Naive thymus-derived CD8-positive, alpha-beta T cell (primary cell): ENCODE measurements at regions of chr19 and their contacts with region 1.

Region 1: DNA sequence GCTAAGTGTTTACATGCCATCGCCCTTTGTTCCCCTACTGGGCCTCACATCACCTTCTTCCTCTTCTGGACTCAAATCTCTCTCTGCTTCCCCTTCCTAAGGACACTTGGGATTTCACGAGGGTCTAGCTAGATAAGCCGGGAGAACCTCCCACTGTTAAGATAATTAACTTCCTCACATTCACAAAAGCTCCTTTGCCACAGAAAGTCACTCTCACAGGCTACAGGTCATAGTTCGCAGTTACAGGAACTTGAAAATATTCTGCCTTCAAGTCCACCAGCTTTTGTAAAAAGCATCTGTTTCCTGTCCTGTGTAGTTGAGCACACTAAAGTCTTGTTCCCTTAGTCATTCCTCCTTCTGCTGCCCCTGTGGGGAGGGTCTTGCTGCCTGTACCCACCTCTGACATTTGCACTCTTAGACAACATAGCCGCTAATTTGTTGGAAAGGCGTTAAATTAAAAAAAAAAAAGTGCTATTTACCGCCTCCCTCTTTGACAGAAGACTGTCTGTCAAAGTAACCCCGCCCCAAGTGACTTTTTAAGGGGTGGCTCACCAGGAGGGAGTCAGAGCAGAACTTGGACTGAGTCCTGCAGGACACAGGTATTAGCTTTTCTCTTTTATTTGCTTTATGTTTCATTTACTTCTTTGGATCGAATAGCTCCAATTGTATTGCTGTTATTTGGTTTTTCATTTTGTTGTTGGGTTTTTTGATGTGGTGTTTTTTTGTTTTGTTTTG is 26.8 kb upstream of the CEACAM21 start:
- DNase-seq: peak; percentile 55 to 93 (median 76)
- ATAC-seq: peak; percentile 63 to 71
- H3K4me3 Mint-ChIP-seq: peak overlapping the region; percentile 92 to 100 (median 99)
- H3K27ac Mint-ChIP-seq: peak overlapping the region; percentile 95 to 100 (median 96)
- H3K4me1 Mint-ChIP-seq: peaks cover 52 to 81% (median 65%) of the 10 kb centered on the region in 4 donors
- H3K27me3 Mint-ChIP-seq: no peaks in the 10 kb centered on the region

Region 2: DNA sequence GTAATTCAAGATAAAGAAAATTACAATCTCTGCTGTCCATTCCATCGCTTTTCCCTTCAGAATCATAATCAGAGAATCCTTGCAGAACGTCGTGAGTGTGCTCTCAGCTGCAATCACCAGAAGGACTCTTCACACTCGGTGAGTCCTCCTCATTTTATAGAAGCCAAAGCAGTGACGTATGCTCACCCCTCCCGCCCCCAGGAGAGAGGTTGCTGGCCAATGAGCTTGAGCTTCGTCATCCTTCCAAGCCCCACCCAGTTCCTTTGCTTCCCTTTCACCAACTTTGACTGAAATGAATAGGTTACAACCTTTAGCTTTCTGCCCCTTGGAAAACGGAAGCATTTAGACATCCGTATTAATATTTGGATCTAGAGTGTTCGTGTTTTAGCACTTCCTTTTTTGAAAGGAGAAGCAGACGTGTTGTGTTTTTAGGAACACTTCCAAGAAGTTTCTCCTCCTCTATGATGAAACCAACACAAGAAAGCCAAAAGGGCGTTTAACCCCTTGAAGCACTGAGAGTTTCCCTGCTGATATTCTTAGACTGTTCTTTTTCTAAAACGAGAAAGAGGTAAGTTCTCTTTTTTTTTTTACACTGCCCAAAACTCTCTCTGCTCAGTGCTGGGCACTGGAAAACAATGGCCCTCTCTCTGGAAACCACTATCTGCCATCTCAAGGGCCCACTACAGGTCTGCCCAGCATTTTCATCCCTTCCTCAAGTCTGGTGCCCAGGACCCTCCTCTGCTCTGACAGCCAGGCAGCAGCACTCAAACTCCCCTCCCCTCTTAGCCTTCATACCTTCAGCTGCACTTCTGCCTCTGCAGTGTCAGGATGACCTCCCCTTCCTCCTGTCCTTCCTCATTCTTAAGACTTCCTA is 17.4 kb before region 1 on chr19:
- POLR2A ChIA-PET with region 1: interaction called, 562 read pairs
- DNase-seq: peak; percentile 62 to 95 (median 90)
- ATAC-seq: peak; percentile 88 to 96
- H3K4me3 Mint-ChIP-seq: peak overlapping the region; percentile 76 to 86 (median 82)
- H3K27ac Mint-ChIP-seq: peak overlapping the region; percentile 78 to 97 (median 90)
- H3K4me1 Mint-ChIP-seq: peaks cover 35 to 67% (median 56%) of the 10 kb centered on the region in 4 donors
- H3K27me3 Mint-ChIP-seq: no peaks in the 10 kb centered on the region

Region 3: GRCh38 chr19:41746593-41747227 is 197.6 kb after region 1 on chr19:
- POLR2A ChIA-PET with region 1: no interaction called
- DNase-seq: peak; percentile 8 to 70 (median 29)
- ATAC-seq: peak; percentile 86 to 87
- H3K4me3 Mint-ChIP-seq: no peak overlapping the region
- H3K27ac Mint-ChIP-seq: no peak overlapping the region
- H3K4me1 Mint-ChIP-seq: peaks cover 3 to 22% (median 6%) of the 10 kb centered on the region in 4 donors
- H3K27me3 Mint-ChIP-seq: peaks cover 34 to 75% (median 53%) of the 10 kb centered on the region in 5 donors